ENCODE measurements at regions of chr18 and their contacts with region 1.

Region 1: DNA sequence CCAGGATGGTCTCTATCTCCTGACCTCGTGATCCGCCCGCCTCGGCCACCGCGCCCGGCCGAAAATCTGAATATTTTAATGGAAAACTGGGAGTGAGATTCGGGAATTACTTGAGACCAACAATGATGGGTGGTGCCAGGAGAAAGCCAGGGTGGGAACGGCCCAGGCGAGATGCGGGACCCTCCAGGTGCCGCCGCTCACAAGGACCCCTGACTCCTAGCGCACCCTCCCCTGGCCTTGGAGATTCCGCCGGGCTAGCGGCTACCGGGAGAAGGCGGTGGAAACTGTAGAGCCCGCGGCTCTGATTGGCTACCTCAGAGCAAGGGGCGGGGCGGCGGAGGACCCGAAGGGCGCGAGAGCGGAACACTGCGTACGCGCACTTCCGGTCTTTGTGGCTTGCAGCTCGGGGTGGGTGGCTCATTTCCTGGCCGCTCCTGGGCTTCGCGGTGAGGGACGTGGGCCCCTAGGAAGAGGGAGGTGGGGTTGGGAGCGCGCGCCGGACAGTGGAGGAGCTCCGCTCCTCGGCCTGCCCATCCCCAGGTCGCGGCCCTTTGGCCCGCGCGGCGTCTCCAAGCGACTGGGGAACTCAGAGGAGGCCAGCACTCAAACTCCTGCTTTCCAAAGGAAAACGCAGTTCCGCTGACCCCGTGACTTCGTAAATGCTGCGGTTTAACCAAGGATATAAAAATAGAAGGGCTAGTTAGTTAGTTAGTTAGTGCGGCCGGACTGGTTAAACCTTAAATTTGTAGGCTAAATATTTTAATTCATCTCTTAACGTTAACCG is at the start of gene ZNF397:
- DNase-seq: peak; percentile 92 to 94
- H3K4me3 ChIP-seq: peak within 1 kb of the TSS; percentile 68
- H3K4me3 Mint-ChIP-seq: peak within 1 kb of the TSS; percentile 80
- H3K27ac Mint-ChIP-seq: peak within 1 kb of the TSS; percentile 94
- H3K4me1 ChIP-seq: no peaks in the 10 kb centered on the region
- H3K4me1 Mint-ChIP-seq: no peaks in the 10 kb centered on the region
- H3K27me3 ChIP-seq: no peaks in the 10 kb centered on the region
- H3K27me3 Mint-ChIP-seq: no peaks in the 10 kb centered on the region
- CTCF ChIP-seq: no peak
- total RNA-seq, gene ZNF397: 4.9 and 6.0 TPM in 2 replicates

Region 2: GRCh38 chr18:35185771-35186170 is 55.1 kb before region 1 on chr18:
- CTCF ChIA-PET with region 1: no interaction called
- POLR2A ChIA-PET with region 1: no interaction called
- intact Hi-C with region 1: no loop called
- DNase-seq: no peak
- H3K4me3 ChIP-seq: no peak overlapping the region
- H3K4me3 Mint-ChIP-seq: no peak overlapping the region
- H3K27ac Mint-ChIP-seq: no peak overlapping the region
- H3K4me1 ChIP-seq: no peaks in the 10 kb centered on the region
- H3K4me1 Mint-ChIP-seq: no peaks in the 10 kb centered on the region
- H3K27me3 ChIP-seq: no peaks in the 10 kb centered on the region
- H3K27me3 Mint-ChIP-seq: peaks cover 4% of the 10 kb centered on the region
- CTCF ChIP-seq: no peak

Region 3: DNA sequence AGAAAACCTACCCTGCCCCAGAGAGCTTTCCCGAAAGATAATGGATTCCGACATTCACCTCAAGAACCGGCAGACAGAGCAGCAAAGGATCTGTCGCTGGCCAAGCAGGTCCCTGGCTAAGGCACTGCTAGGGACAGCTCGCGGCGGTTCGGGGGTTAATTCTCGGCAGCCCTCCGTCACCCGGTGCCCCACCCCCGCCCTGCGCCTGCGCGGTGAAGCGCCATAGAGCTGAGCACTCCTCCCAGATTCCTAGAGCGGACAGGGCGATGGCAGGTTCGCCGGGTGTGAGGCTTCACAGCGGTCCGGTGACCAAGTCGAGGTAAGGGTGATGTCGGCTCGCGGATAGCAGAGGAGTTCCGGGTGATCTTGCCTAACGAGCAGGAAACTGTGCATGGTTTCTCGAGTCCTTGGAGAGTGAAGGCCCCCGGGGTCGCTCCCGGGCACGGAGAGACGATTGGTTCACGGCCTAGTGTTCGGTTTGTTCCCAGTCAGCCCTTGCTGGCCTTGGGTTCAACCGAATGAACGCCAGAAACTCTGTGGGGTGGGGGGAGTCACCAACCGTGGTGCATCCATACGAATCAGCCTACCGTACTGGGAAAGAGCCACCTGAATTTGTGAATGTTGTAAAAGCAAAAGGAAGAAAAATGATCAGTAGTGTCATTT is 49.3 kb after region 1 on chr18 and contains the start of gene ZSCAN30:
- CTCF ChIA-PET with region 1: no interaction called
- POLR2A ChIA-PET with region 1: interaction called, 3 read pairs
- intact Hi-C with region 1: loop called (anchors 2 kb)
- DNase-seq: peak; percentile 91 to 92
- H3K4me3 ChIP-seq: peak within 1 kb of the TSS; percentile 47
- H3K4me3 Mint-ChIP-seq: peak within 1 kb of the TSS; percentile 95
- H3K27ac Mint-ChIP-seq: peak within 1 kb of the TSS; percentile 97
- H3K4me1 ChIP-seq: no peaks in the 10 kb centered on the region
- H3K4me1 Mint-ChIP-seq: peaks cover 6% of the 10 kb centered on the region
- H3K27me3 ChIP-seq: no peaks in the 10 kb centered on the region
- H3K27me3 Mint-ChIP-seq: no peaks in the 10 kb centered on the region
- CTCF ChIP-seq: no peak
- total RNA-seq, gene ZSCAN30: 11.9 and 14.1 TPM in 2 replicates

Measured in Caco-2 (cell line).